ENCODE measurements at regions of chr2 and their contacts with region 1.

Region 1: GRCh38 chr2:177332041-177332991 is 60.3 kb upstream of the AGPS start:
- DNase-seq: peak; percentile 69
- ATAC-seq: peak; percentile 82
- H3K4me3 Mint-ChIP-seq: no peak overlapping the region
- H3K27ac Mint-ChIP-seq: no peak overlapping the region
- H3K4me1 Mint-ChIP-seq: peaks cover 15% of the 10 kb centered on the region
- H3K27me3 Mint-ChIP-seq: no peaks in the 10 kb centered on the region

Region 2: DNA sequence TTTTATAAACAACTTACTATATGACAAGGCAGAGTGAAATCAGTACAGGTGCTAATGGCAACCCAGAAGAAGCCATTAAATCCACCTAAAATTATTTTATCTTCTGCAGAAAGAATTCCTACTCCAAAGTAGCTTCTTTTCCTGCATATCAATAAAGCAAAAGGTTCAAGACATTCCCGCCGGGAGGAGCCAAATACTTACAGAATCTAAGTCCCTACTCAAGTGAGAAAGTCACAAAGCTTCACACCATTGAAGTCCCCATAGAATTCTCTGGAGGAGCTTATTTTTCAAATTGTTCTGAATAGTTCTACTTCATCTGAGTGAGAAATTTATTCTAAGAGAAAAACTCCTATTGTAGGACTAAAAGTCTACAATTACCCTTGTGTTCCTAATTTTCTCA is 353.4 kb before region 1 on chr2:
- CTCF ChIA-PET with region 1: no interaction called
- POLR2A ChIA-PET with region 1: no interaction called
- DNase-seq: no peak
- ATAC-seq: no peak
- H3K4me3 Mint-ChIP-seq: no peak overlapping the region
- H3K27ac Mint-ChIP-seq: no peak overlapping the region
- H3K4me1 Mint-ChIP-seq: no peaks in the 10 kb centered on the region
- H3K27me3 Mint-ChIP-seq: peaks cover 12% of the 10 kb centered on the region

Region 3: DNA sequence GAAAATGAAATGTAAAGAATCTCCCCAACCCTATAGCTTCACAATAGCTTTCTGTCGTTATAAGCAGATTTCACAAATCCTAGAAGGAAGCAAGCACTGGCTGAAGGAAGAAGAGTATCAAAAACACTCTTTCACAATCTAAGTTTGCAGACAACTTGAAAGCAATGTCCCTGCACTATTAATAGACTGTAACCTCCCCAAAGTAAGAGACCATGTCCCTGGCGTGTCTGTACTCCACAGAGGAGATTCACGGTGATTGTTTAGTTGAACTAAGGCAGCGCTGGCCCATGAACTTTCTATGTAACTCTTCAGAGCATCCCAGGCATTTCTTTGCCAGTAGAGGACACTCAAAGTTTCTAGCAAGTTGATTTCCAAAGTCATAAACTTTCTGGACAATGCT is 247.7 kb before region 1 on chr2:
- CTCF ChIA-PET with region 1: no interaction called
- POLR2A ChIA-PET with region 1: no interaction called
- DNase-seq: no peak
- ATAC-seq: no peak
- H3K4me3 Mint-ChIP-seq: no peak overlapping the region
- H3K27ac Mint-ChIP-seq: no peak overlapping the region
- H3K4me1 Mint-ChIP-seq: no peaks in the 10 kb centered on the region
- H3K27me3 Mint-ChIP-seq: peaks cover 1% of the 10 kb centered on the region

Region 4: GRCh38 chr2:177348733-177349693 is 16.7 kb after region 1 on chr2:
- CTCF ChIA-PET with region 1: interaction called, 46 read pairs
- POLR2A ChIA-PET with region 1: no interaction called
- DNase-seq: no peak
- ATAC-seq: no peak
- H3K4me3 Mint-ChIP-seq: no peak overlapping the region
- H3K27ac Mint-ChIP-seq: no peak overlapping the region
- H3K4me1 Mint-ChIP-seq: peaks cover 5% of the 10 kb centered on the region
- H3K27me3 Mint-ChIP-seq: no peaks in the 10 kb centered on the region

Region 5: DNA sequence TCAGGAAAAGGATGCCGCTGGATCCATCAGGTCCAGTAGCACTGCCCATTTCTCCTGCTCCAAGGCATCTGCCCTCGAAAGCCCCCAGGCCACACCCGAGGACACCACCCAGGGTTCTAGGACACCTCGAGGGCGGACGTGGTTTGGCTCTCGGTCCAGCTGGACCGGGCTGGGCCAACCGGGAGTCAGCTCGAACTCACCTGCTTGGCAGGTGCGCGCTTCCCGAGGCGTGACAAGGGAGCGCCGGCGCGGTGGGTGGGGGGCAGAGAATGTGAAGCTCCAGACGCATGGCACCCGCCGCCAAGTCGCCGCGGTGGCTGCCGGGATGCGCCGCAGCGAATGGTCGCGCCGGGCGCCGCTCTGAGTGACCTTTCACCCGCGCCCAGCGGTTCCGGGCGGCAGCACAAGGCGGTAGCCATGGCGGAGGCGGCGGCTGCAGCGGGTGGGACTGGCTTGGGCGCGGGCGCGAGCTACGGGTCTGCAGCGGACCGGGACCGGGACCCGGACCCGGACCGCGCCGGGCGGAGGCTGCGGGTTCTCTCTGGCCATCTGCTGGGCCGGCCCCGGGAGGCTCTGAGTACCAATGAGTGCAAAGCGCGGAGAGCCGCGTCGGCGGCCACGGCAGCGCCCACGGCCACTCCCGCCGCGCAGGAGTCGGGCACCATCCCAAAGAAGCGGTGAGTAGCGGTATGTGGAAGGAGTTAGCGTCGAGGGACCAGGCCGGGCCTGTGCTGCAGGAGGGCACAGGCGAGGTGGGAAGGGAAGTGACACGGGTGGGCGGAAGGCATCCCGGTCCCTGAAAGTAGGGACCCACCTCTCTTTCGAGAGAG is 60.3 kb after region 1 on chr2 and contains the start of gene AGPS:
- CTCF ChIA-PET with region 1: interaction called, 11 read pairs
- POLR2A ChIA-PET with region 1: no interaction called
- DNase-seq: peak; percentile 86
- ATAC-seq: peak; percentile 96
- H3K4me3 Mint-ChIP-seq: peak within 1 kb of the TSS; percentile 88
- H3K27ac Mint-ChIP-seq: peak within 1 kb of the TSS; percentile 93
- H3K4me1 Mint-ChIP-seq: peaks cover 52% of the 10 kb centered on the region
- H3K27me3 Mint-ChIP-seq: no peaks in the 10 kb centered on the region
- total RNA-seq, gene AGPS: 65.9 to 67.9 TPM

Region 6: DNA sequence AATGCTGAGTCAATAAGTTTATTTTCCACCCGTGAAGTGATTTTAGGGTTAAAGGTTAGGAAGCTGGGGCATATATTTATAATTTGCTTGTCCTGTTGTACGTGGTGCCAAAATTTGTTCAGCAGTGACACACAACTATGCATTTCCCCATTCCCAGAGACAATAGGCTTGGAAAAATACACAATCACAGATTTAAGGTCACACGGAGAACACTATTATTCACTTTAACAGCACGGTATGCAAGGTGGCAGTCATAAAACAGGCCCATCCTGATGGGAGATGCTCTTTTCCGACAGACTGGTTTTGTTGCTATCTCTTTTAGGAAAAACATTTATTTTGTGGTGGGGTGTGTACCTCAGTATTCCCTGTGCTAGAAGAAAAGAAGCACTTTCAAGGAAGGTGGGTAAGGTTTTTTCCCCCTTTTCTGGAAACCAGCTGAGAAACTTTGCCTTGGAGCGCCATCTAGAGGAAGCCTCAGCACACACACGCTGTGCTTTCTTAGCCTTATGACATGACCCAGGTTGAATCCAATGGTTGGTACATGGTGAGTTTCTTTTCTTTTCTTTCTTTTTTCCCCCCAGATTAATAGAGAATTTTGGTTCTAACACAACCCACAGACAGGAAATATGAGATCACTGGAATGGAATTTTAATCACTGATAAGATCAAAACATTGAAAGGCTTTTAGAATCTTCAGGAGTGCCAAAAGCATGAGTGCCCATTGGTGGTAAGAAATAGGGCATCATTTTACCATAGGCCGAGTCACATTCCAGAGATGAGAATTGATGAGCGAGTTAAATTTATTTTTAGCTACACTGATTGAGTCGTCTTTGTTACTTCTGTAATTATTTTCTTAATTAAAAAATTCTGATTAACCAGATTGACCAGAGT is 392.3 kb after region 1 on chr2:
- CTCF ChIA-PET with region 1: interaction called, 21 read pairs
- POLR2A ChIA-PET with region 1: no interaction called
- DNase-seq: peak; percentile 61
- ATAC-seq: peak; percentile 74
- H3K4me3 Mint-ChIP-seq: no peak overlapping the region
- H3K27ac Mint-ChIP-seq: no peak overlapping the region
- H3K4me1 Mint-ChIP-seq: no peaks in the 10 kb centered on the region
- H3K27me3 Mint-ChIP-seq: peaks cover 27% of the 10 kb centered on the region

Measured in activated CD8-positive, alpha-beta T cell treated with anti-CD3 and anti-CD28 coated beads, Interleukin-2, amount 10 ng/mL, durations not matched to agents 7 days and 5 days (primary cell).